OCI-LY7 (cell line): ENCODE measurements at regions of chr19 and their contacts with region 1.

Region 1: GRCh38 chr19:771332-771785 is 20.4 kb downstream of the MISP start:
- DNase-seq: peak; percentile 45
- H3K4me3 ChIP-seq: no peak overlapping the region
- H3K27ac ChIP-seq: no peak overlapping the region
- H3K4me1 ChIP-seq: no peaks in the 10 kb centered on the region
- CTCF ChIP-seq: peak; percentile 61

Region 2: DNA sequence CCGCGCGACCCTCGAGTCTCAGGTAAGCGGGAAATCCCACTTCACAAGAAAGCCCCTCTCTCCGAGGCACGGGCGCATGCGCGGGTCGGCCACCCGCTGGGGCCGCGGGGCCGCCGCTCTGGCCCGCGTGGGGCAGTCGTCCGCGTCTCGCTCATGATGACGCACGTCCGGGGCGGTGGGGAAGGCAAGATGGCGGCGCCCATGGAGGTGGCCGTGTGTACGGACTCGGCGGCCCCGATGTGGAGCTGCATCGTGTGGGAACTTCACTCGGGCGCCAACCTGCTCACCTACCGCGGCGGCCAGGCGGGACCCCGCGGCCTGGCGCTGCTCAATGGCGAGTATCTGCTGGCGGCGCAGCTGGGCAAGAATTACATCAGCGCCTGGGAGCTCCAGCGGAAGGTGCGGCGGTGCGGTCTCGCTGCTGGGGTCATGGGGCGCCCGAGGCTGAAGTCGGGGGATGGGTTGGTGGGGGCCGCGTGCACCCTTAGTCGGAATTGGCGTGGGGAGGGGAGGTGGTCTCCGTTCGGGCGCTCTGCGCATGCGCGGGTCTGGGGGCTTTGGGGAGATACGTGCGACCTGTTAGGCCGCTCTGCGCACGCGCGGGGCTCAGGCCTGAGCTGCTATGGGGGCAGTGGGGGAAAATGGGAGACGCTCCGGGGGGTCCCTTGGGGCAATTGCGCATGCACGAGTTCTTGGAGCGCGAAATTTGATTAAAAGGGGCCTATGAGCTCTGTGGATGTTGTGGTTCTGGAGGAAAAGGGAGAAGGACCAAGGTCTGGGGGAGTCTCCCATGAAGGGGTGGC is 213.0 kb after region 1 on chr19 and contains the start of gene WDR18:
- CTCF ChIA-PET with region 1: no interaction called
- POLR2A ChIA-PET with region 1: no interaction called
- intact Hi-C with region 1: loop called (anchors 2 kb)
- DNase-seq: peak; percentile 93
- H3K4me3 ChIP-seq: peak within 1 kb of the TSS; percentile 92
- H3K27ac ChIP-seq: peak within 1 kb of the TSS; percentile 29
- H3K4me1 ChIP-seq: peaks cover 24% of the 10 kb centered on the region
- CTCF ChIP-seq: no peak
- total RNA-seq, gene WDR18: 61.6 and 74.7 TPM in 2 replicates

Region 3: DNA sequence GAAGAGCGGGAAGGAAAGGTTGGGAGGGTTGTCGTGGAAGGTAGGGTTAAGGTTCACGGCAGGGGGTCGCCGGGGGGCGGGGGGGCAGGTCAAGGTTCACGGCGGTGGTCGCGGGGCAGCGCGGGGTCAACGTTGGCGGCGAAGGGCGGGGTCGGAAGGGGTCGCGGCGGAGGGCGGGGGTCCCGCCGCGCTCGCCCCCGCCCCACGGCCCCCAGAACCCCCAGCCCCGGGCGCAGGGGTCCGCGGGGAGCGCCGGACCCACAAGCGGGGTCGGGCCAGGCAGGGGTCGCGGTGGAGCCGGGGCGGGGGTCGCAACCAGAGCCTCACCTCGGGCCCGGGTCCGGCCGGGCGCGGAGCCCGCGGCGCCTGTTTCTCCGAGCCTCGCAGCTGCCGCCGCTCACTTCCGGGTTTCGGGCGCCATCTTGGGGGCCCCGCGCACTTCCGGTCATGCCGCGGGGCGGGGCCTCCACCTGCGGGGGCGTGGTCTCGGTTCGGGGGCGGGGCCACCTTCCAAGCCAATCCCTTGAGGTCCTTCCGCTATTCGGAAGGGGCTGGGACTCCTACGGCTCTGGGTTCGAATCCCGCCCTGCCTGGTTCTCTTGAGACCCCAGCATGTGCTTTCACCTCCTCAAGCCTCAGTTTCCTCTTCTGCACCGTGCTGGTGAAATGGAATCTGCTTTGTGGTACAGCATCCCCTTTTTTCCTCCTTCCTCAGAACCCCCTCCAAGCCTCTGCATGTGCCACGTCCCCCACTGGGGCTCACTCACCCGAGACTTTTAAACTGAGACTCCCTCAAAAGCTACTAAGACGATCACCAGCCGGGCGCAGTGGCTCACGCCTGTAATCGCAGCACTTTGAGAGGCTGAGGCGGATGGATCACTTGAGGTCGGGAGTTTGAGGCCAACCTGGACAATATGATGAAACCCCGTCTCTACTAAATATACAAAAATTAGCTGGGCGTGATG is 402.8 kb after region 1 on chr19 and contains the start of gene SBNO2:
- CTCF ChIA-PET with region 1: no interaction called
- POLR2A ChIA-PET with region 1: no interaction called
- intact Hi-C with region 1: no loop called
- DNase-seq: peak; percentile 91
- H3K4me3 ChIP-seq: peak within 1 kb of the TSS; percentile 100
- H3K27ac ChIP-seq: peak within 1 kb of the TSS; percentile 34
- H3K4me1 ChIP-seq: peaks cover 15% of the 10 kb centered on the region
- CTCF ChIP-seq: no peak
- total RNA-seq, gene SBNO2: 17.6 and 26.6 TPM in 2 replicates